ENCODE measurements at regions of chr1 and their contacts with region 1.

Region 1: GRCh38 chr1:27154991-27155781 is at the start of gene SLC9A1:
- DNase-seq: peak; percentile 98
- H3K4me3 ChIP-seq: peak within 1 kb of the TSS; percentile 76 to 86 (median 80)
- H3K27ac ChIP-seq: peak within 1 kb of the TSS; percentile 90 to 94 (median 92)
- H3K4me1 ChIP-seq: peaks cover 42 to 54% (median 49%) of the 10 kb centered on the region in 4 donors
- H3K27me3 ChIP-seq: no peaks in the 10 kb centered on the region
- CTCF ChIP-seq: peak; percentile 64 to 76 (median 69)
- EP300 ChIP-seq: no peak
- POLR2A ChIP-seq: peak; percentile 94
- total RNA-seq, gene SLC9A1: 8.3 to 29.2 (median 11.4) TPM

Region 2: DNA sequence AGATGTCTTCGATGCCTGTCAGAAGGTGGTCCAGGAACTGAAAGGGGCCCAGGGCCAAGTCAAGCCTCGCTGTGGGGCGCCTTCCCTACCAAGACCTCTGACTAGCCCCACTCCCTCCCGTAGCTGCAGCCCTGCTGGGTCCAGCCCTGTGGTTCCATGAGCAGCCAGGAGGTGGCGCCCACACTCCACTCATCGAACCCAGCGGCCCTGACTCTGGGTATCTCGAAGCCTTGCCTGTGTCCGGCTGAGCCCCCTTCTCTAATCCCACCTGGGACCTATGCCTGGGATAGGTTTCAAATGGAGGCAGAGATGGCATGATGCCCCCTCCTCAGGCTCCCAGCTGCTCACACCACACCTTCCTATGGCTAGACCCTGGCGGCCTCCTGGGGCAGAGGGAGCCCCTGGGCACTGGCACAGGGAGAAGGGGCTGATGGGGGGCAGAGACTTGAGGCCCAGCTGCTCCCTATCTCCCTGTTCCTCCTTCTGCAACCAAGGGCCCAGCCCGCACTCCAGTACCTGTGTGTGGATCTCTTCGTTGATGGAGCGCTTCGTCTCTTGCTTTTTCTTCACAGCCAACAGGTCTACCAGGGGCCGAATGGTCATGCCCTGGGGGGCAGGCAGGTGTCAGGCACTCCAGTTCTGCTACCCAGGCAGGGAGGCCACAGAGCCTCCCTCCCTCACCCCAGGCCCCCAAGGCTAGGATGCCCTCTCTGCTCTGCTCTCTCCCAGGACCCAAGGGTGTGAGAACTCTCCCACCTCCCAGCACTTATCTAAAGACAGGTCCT is 52.3 kb before region 1 on chr1:
- intact Hi-C with region 1: loop called (anchors 5 kb)
- DNase-seq: peak; percentile 96
- H3K4me3 ChIP-seq: no peak overlapping the region
- H3K27ac ChIP-seq: no peak overlapping the region
- H3K4me1 ChIP-seq: peaks cover 26 to 33% (median 30%) of the 10 kb centered on the region in 4 donors
- H3K27me3 ChIP-seq: no peaks in the 10 kb centered on the region
- CTCF ChIP-seq: peak in 2 of 3 experiments; percentile 94 to 96
- EP300 ChIP-seq: no peak
- POLR2A ChIP-seq: no peak

Region 3: GRCh38 chr1:27235827-27236226 is 80.6 kb after region 1 on chr1:
- intact Hi-C with region 1: loop called (anchors 5 kb)
- DNase-seq: no peak
- H3K4me3 ChIP-seq: peak overlapping the region; percentile 79 to 99 (median 92)
- H3K27ac ChIP-seq: peak overlapping the region; percentile 89 to 91 (median 90)
- H3K4me1 ChIP-seq: peaks cover 25 to 44% (median 34%) of the 10 kb centered on the region in 4 donors
- H3K27me3 ChIP-seq: no peaks in the 10 kb centered on the region
- CTCF ChIP-seq: no peak
- EP300 ChIP-seq: no peak
- POLR2A ChIP-seq: no peak